ENCODE measurements at regions of chr9 and their contacts with region 1.

Region 1: GRCh38 chr9:4662108-4662988 is at the start of gene PLPP6:
- DNase-seq: peak; percentile 86
- ATAC-seq: peak; percentile 92
- H3K4me3 ChIP-seq: peak within 1 kb of the TSS; percentile 75 to 81 (median 77)
- H3K27ac ChIP-seq: peak within 1 kb of the TSS; percentile 93
- H3K4me1 ChIP-seq: peaks cover 61% of the 10 kb centered on the region
- H3K27me3 ChIP-seq: no peaks in the 10 kb centered on the region
- CTCF ChIP-seq: peak; percentile 95
- EP300 ChIP-seq: peak; percentile 43 to 69; a peak in 3 of 4 replicates
- POLR2A ChIP-seq: peak; percentile 73 to 76
- RAD21 ChIP-seq: peak; percentile 40
- total RNA-seq, gene PLPP6: 9.0 and 15.5 TPM in 2 replicates

Region 2: DNA sequence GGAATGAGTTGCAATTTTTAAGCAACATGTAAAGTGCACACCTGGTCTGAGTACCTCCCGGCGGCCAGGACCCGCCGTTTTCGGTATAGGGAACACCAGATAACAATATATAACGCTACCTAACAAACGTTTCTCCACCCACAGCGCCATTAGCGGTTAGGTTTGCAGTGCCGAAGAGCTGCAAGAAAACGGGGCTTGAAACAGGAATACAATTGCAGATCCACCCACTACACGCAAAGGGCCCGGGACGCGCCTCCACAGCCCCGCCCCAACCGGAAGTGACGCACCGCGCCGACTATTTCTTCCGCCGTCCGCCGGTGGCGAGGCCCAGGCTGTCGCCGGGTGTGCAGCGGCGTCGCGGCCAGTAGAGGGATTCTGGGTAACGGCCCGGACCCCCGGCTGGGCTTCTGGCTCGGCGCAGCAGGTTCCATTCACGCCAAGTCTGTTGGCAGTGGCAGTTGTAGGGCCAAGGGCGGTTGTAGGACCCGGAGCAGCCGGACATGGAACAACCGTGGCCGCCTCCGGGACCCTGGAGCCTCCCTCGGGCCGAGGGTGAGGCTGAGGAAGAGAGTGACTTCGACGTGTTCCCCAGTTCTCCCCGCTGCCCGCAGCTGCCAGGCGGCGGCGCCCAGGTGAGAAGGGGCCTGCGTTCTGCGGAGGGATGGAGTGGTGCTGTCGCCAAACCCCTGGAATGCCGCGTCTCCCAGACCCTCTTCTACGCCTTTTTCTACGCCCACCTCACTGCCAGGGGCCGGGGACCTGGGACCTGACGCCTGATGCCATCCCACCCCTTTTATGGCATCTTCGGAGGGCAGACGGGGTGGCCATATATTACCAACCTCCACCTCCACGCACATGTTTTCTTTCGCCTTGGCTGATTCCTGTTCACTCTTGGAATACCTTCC is 17.2 kb after region 1 on chr9 and contains the start of gene CDC37L1:
- CTCF ChIA-PET with region 1: interaction called, 3 read pairs
- POLR2A ChIA-PET with region 1: interaction called, 43 read pairs
- in situ Hi-C with region 1: no loop called
- intact Hi-C with region 1: loop called (anchors 1 kb)
- DNase-seq: peak; percentile 91
- ATAC-seq: peak; percentile 93
- H3K4me3 ChIP-seq: peak within 1 kb of the TSS; percentile 79 to 94 (median 87)
- H3K27ac ChIP-seq: peak within 1 kb of the TSS; percentile 99
- H3K4me1 ChIP-seq: peaks cover 48% of the 10 kb centered on the region
- H3K27me3 ChIP-seq: no peaks in the 10 kb centered on the region; a peak in 1 of 5 replicates
- CTCF ChIP-seq: peak; percentile 72
- EP300 ChIP-seq: peak; percentile 16 to 17; a peak in 2 of 4 replicates
- POLR2A ChIP-seq: peak; percentile 93 to 95
- RAD21 ChIP-seq: peak; percentile 63
- total RNA-seq, gene CDC37L1: 17.0 and 21.6 TPM in 2 replicates

Region 3: GRCh38 chr9:4690144-4690543 is 27.8 kb after region 1 on chr9:
- CTCF ChIA-PET with region 1: no interaction called
- POLR2A ChIA-PET with region 1: no interaction called
- in situ Hi-C with region 1: no loop called
- intact Hi-C with region 1: loop called (anchors 5 kb)
- DNase-seq: no peak
- ATAC-seq: no peak
- H3K4me3 ChIP-seq: no peak overlapping the region
- H3K27ac ChIP-seq: no peak overlapping the region
- H3K4me1 ChIP-seq: no peaks in the 10 kb centered on the region
- H3K27me3 ChIP-seq: no peaks in the 10 kb centered on the region
- CTCF ChIP-seq: no peak
- EP300 ChIP-seq: no peak
- POLR2A ChIP-seq: no peak
- RAD21 ChIP-seq: no peak

Region 4: GRCh38 chr9:4734150-4734549 is 71.8 kb after region 1 on chr9:
- CTCF ChIA-PET with region 1: no interaction called
- POLR2A ChIA-PET with region 1: interaction called, 7 read pairs
- in situ Hi-C with region 1: loop called (anchors 5 kb)
- intact Hi-C with region 1: no loop called
- DNase-seq: no peak
- ATAC-seq: peak; percentile 62
- H3K4me3 ChIP-seq: no peak overlapping the region
- H3K27ac ChIP-seq: no peak overlapping the region
- H3K4me1 ChIP-seq: peaks cover 54% of the 10 kb centered on the region
- H3K27me3 ChIP-seq: no peaks in the 10 kb centered on the region
- CTCF ChIP-seq: no peak
- EP300 ChIP-seq: no peak
- POLR2A ChIP-seq: no peak
- RAD21 ChIP-seq: no peak